GM12878 (cell line): ENCODE measurements at regions of chr3 and their contacts with region 1.

Region 1: GRCh38 chr3:41920406-41920965 is 41.4 kb downstream of the ULK4 start:
- DNase-seq: no peak
- ATAC-seq: no peak
- H3K4me3 ChIP-seq: no peak overlapping the region
- H3K27ac ChIP-seq: no peak overlapping the region
- H3K4me1 ChIP-seq: no peaks in the 10 kb centered on the region
- H3K27me3 ChIP-seq: no peaks in the 10 kb centered on the region
- CTCF ChIP-seq: no peak
- EP300 ChIP-seq: no peak
- POLR2A ChIP-seq: no peak
- RAD21 ChIP-seq: no peak

Region 2: DNA sequence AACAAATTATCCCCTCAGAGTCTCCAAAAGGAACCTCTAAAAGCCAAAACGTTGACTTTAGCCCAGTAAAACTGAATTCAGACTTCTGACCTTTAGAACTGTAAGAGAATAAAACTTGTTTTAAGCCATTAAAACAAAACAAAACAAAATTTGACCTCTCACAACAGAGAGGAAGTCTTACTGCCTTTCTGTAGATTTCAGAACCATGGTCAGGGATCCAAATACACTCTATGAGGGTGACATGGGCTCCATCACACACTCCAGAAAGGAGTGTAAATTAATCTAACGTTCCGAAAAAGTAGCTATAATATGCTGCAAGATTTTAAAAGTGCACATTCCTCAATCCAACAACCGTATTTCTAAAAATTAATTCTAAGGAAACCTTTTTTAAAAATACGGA is 1482.6 kb before region 1 on chr3:
- CTCF ChIA-PET with region 1: no interaction called
- POLR2A ChIA-PET with region 1: interaction called, 11 read pairs
- RAD21 ChIA-PET with region 1: no interaction called
- SMC1A ChIA-PET with region 1: no interaction called
- in situ Hi-C with region 1: no loop called
- intact Hi-C with region 1: no loop called
- DNase-seq: no peak
- ATAC-seq: no peak
- H3K4me3 ChIP-seq: no peak overlapping the region
- H3K27ac ChIP-seq: no peak overlapping the region
- H3K4me1 ChIP-seq: no peaks in the 10 kb centered on the region
- H3K27me3 ChIP-seq: no peaks in the 10 kb centered on the region
- CTCF ChIP-seq: no peak
- EP300 ChIP-seq: no peak
- POLR2A ChIP-seq: no peak
- RAD21 ChIP-seq: no peak

Region 3: DNA sequence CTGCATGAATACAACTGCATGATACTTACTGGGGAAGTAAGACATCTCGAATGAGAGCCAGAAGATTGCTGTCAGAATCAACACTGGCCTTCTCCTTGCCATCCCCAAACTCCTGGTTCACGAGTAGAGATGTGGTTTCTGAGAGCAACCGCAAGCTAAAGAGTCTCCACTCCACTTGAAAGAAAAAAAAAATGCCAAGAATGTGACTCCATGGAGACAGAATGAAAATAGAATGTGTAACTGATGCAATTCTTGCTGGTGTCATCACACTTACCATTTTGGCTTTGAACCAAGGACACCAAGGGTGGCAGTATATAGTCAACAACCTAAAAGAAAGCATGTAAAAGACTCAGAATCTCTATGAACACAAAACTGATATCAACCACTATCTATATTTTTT is 239.0 kb before region 1 on chr3:
- CTCF ChIA-PET with region 1: no interaction called
- POLR2A ChIA-PET with region 1: no interaction called
- RAD21 ChIA-PET with region 1: no interaction called
- SMC1A ChIA-PET with region 1: no interaction called
- in situ Hi-C with region 1: no loop called
- intact Hi-C with region 1: no loop called
- DNase-seq: no peak
- ATAC-seq: no peak
- H3K4me3 ChIP-seq: no peak overlapping the region
- H3K27ac ChIP-seq: no peak overlapping the region
- H3K4me1 ChIP-seq: no peaks in the 10 kb centered on the region
- H3K27me3 ChIP-seq: no peaks in the 10 kb centered on the region
- CTCF ChIP-seq: no peak
- EP300 ChIP-seq: no peak
- POLR2A ChIP-seq: no peak
- RAD21 ChIP-seq: no peak